ENCODE measurements at regions of chr6 and their contacts with region 1.

Region 1: DNA sequence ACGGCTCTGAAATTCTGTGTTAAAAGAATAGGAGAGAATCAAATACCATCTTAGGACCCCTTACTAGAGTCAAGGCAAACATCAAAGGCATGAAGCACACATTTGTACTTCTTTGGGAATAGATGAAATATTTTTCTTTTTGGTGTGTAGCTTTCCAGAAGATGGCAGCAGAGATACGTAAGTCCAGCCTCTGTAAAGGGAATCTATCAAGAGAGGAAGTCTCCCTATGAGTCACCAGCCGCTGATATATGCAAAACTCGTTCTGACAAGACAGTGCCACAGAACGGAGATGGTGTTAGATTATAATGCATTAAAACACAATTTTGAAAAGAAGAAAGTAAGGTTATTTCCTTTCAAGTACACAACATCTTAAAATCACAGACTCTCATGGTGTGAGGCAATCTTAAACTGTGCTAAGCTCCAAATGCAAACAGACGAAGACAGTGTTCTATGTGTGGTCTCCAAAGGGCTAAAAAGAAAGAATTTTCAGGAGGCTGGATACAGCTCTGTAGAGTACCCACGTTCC is 120.0 kb upstream of the AGPAT4 start:
- DNase-seq: peak; percentile 82
- H3K4me3 ChIP-seq: no peak overlapping the region
- H3K27ac ChIP-seq: no peak overlapping the region
- H3K4me1 ChIP-seq: peaks cover 18% of the 10 kb centered on the region
- H3K27me3 ChIP-seq: no peaks in the 10 kb centered on the region
- CTCF ChIP-seq: peak; percentile 53 to 68

Region 2: DNA sequence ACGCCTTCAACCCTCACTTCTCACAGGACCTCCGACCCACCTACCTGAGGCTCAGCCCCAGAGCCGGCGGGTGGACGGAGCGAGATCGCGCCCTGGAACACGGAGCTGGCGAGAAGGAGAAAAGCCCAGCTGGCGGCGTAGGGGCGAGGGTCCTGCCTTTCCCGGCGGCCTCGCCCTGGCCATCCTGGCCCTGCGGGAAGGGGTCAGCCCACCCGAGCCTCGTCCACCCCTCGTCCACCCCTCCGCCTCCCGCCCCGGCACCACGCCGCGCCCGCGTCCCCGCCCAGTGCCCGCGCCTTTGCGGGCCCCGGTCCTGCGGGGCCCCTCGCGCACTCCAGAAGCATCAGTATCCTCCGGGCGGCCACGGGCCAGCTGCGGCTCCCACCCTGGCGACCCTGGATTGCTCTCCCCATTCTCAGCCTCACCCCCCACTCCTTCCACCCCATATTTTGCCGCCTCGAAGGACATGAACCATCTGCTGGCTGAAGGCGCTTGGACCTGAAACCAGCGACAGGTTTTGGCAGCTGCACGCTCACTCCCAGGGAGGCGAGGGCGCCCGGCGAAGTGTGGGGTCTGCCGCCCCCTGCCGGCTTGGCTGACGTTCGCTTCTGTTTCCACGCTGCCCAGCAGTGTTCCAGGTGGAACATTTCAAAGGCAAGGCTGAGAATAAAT is 626.8 kb before region 1 on chr6:
- CTCF ChIA-PET with region 1: no interaction called
- dilution Hi-C with region 1: loop called (anchors 25 kb)
- in situ Hi-C with region 1: no loop called
- intact Hi-C with region 1: no loop called
- DNase-seq: peak; percentile 52
- H3K4me3 ChIP-seq: peak overlapping the region; percentile 58 to 68 (median 61)
- H3K27ac ChIP-seq: no peak overlapping the region
- H3K4me1 ChIP-seq: peaks cover 4% of the 10 kb centered on the region
- H3K27me3 ChIP-seq: no peaks in the 10 kb centered on the region
- CTCF ChIP-seq: peak; percentile 76 to 95

Region 3: GRCh38 chr6:161498359-161498758 is 104.5 kb after region 1 on chr6:
- CTCF ChIA-PET with region 1: no interaction called
- dilution Hi-C with region 1: no loop called
- in situ Hi-C with region 1: no loop called
- intact Hi-C with region 1: loop called (anchors 1 kb)
- DNase-seq: peak; percentile 61
- H3K4me3 ChIP-seq: no peak overlapping the region
- H3K27ac ChIP-seq: no peak overlapping the region
- H3K4me1 ChIP-seq: no peaks in the 10 kb centered on the region
- H3K27me3 ChIP-seq: no peaks in the 10 kb centered on the region
- CTCF ChIP-seq: peak; percentile 67 to 83

Region 4: GRCh38 chr6:161694995-161695394 is 301.1 kb after region 1 on chr6:
- CTCF ChIA-PET with region 1: no interaction called
- dilution Hi-C with region 1: no loop called
- in situ Hi-C with region 1: no loop called
- intact Hi-C with region 1: loop called (anchors 1 kb)
- DNase-seq: no peak
- H3K4me3 ChIP-seq: no peak overlapping the region
- H3K27ac ChIP-seq: no peak overlapping the region
- H3K4me1 ChIP-seq: no peaks in the 10 kb centered on the region
- H3K27me3 ChIP-seq: no peaks in the 10 kb centered on the region
- CTCF ChIP-seq: peak; percentile 31 to 58

Region 5: DNA sequence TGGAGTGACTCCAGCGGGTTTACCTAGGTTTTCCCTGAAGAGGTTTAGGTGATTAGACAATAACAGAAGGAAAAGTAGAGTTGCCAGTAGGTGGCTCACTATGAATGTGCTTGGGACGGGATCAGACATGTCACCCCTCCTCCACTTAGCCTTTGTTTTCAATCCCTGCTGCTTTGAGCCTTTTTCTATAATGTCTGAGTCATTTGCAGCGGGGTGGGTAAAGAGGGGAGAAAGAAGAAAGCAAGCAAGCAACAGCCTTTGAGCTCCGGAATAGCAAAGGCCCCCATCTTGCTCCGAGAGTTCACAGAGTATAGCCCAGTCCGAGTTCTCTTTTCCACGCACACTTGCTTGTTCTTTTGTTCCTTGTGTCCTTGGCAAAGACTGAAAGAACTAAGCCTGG is 1463.0 kb after region 1 on chr6:
- CTCF ChIA-PET with region 1: no interaction called
- dilution Hi-C with region 1: no loop called
- in situ Hi-C with region 1: no loop called
- intact Hi-C with region 1: loop called (anchors 10 kb)
- DNase-seq: peak; percentile 27
- H3K4me3 ChIP-seq: no peak overlapping the region
- H3K27ac ChIP-seq: no peak overlapping the region
- H3K4me1 ChIP-seq: no peaks in the 10 kb centered on the region
- H3K27me3 ChIP-seq: no peaks in the 10 kb centered on the region
- CTCF ChIP-seq: peak; percentile 26 to 68